Right cardiac atrium (tissue), 5 donors: ENCODE measurements at regions of chr2 and their contacts with region 1.

Region 1: GRCh38 chr2:17719562-17720371 is 33.8 kb downstream of the SMC6 start:
- DNase-seq: no peak
- ATAC-seq: no peak
- H3K4me3 ChIP-seq: no peak overlapping the region
- H3K27ac ChIP-seq: no peak overlapping the region
- H3K4me1 ChIP-seq: no peaks in the 10 kb centered on the region
- H3K27me3 ChIP-seq: no peaks in the 10 kb centered on the region

Region 2: DNA sequence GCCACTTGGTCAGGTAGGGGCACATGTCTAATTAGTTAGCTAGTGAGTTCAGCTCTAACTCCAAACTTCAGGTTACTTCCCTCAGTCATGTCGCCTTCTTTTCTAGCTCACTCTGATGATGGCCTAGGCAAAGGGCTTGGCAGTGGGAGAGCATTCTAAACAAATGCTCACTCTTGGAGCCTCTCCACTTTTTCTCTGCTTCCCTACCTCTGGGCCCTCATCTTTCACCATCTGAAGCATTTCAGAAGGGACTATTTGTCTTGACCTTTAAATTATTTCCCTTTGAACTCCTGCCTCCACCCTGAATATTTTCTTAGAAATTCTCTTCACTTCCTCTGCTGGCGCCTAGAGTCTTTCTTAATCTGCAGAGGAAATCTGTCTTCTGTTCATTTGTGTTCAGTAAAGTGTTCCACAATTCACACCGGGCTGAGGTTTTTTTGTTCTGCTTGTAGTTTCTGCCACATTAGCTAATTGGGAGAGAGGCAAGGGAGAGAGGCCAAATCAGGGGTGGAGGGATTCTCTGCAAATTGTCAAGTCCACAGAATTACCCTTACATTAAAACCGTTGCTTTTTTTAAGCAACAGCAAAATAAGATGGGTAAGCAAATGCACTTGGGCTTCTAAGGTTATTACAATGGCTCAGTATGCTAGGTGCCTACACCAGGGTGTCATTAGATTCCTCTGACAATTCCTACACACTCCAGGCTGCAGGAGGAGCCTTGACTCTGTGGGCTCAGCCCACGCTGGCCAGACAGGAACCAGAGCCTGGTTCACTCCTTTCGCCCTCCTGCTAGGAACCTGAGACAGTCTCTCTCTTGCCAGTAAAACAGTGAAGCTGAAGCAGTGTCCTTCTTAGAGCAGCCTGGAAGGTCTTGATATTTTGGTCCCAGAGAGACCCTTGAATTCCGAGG is 102.0 kb after region 1 on chr2:
- intact Hi-C with region 1: loop called in 1 of 4 experiments (anchors 10 kb)
- DNase-seq: peak in 1 of 3 donors; percentile 46
- ATAC-seq: peak; percentile 52 to 64
- H3K4me3 ChIP-seq: no peak overlapping the region
- H3K27ac ChIP-seq: peak overlapping the region; percentile 93
- H3K4me1 ChIP-seq: peaks cover 3% of the 10 kb centered on the region
- H3K27me3 ChIP-seq: no peaks in the 10 kb centered on the region

Region 3: GRCh38 chr2:17830053-17831034 is 110.6 kb after region 1 on chr2:
- intact Hi-C with region 1: loop called in 2 of 4 experiments (anchors 5 to 10 kb)
- DNase-seq: peak; percentile 65 to 89 (median 87)
- ATAC-seq: peak; percentile 84 to 97
- H3K4me3 ChIP-seq: no peak overlapping the region
- H3K27ac ChIP-seq: no peak overlapping the region
- H3K4me1 ChIP-seq: no peaks in the 10 kb centered on the region
- H3K27me3 ChIP-seq: no peaks in the 10 kb centered on the region